Right cardiac atrium (tissue), 5 donors: ENCODE measurements at regions of chr4 and their contacts with region 1.

Region 1: DNA sequence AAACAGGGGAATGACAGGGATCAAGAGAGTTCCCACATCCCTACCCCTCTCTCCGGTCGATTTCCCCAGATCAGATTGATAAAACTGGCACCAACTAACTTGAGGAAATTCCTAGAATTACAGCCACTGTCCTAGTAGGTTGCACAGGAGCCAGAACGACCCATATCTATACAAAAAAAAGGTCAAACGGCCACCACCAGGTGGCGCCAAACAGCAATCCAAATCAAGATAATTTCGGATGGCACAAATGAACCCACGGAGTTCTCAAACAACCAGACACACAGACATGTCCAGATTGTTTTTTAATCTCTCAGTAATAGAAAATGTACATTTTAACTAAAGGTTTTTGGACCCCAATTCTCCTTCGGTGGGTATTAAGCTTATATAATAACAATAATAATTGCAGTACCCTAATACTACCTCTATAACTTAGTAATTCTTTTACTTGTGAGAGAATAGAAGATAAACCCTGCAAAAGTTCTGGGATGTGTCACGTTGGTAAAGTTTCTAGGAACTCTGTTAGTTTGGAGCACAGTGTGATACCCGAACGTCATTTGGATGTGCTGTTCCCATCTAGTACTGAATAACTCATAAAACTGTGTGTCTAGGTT is 212.6 kb downstream of the SPOCK3 start:
- DNase-seq: peak; percentile 58 to 86 (median 72)
- ATAC-seq: peak; percentile 42 to 56
- H3K4me3 ChIP-seq: no peak overlapping the region
- H3K27ac ChIP-seq: no peak overlapping the region
- H3K4me1 ChIP-seq: no peaks in the 10 kb centered on the region
- H3K27me3 ChIP-seq: no peaks in the 10 kb centered on the region

Region 2: GRCh38 chr4:167290678-167291077 is 269.0 kb after region 1 on chr4:
- intact Hi-C with region 1: loop called in 3 of 4 experiments (anchors 5 kb)
- DNase-seq: no peak
- ATAC-seq: no peak
- H3K4me3 ChIP-seq: no peak overlapping the region
- H3K27ac ChIP-seq: no peak overlapping the region
- H3K4me1 ChIP-seq: no peaks in the 10 kb centered on the region
- H3K27me3 ChIP-seq: no peaks in the 10 kb centered on the region

Region 3: DNA sequence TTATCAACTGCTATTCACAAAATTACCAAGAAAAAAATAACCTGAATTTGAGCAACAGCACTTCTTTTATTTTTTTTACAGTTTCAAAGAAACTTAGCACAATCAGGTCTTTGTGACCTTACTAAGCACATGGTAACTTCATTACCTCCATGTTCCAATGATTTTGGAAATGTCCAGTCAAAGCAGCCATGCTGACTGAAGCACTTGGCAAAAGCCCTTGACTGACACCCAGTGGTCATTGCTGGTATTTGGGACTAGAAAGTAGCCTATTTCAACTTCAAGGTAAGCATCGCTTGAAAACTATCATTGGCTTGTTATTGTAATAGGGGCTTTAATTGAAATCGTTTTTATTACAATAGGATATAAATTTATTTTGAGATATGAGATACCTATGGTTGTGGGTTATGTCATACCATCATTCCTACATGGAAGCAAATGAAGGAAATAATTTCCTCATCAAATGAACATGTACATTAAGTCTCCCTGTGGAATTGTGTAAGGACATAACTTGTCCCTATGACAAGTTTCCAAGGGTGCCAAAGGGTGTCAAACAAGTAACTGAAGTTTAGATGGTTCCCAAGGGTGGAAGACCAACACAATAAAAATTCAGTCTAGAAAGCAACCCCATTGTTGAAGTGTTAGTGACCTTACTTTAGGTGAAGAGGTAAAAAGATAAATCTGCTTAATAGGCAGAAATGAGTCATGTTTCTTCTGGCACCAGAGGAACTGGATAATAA is 1055.5 kb after region 1 on chr4:
- intact Hi-C with region 1: loop called in 2 of 4 experiments (anchors 10 kb)
- DNase-seq: peak in 2 of 3 donors; percentile 26 to 36
- ATAC-seq: peak in 1 of 2 donors; percentile 43
- H3K4me3 ChIP-seq: no peak overlapping the region
- H3K27ac ChIP-seq: no peak overlapping the region
- H3K4me1 ChIP-seq: no peaks in the 10 kb centered on the region
- H3K27me3 ChIP-seq: no peaks in the 10 kb centered on the region

Region 4: DNA sequence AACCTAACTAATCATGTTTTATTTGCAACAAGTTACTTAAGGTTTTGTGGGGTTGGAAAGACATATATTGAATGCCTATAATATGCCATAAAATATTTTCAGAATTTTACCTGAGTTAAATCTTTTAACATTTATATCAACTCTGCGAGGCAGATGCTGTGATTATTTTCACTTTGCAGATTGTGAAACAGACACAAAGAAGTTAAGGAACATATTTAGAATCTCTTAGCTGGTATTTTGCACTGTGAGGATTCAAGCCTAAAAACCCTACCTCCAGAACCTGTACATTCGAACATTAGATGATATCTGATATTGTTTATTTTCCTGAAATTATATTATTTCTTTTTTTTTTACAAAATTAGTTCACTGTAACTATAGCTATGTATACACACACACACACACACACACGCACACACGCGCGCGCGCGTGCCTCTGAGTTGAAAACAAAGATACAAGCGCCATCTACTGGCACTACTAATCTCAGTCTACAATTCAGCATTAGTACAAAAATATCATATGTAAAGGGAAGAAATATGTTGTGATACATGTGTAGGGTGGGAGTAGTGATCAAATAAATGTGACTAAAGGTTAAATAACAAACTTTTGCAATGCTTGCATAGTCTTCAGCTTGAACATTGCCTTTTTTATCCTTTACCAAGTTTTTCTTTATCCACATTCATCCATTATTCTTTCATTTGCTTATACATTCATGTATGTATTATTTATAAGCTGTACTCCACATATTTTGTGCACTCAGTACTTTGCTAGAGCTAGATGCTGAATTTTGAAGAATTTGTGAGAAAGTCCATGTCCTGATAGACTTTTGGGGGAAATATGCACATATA is 1132.2 kb after region 1 on chr4:
- intact Hi-C with region 1: loop called in 1 of 4 experiments (anchors 10 kb)
- DNase-seq: peak; percentile 73 to 94 (median 89)
- ATAC-seq: peak; percentile 68 to 69
- H3K4me3 ChIP-seq: peak overlapping the region; percentile 48
- H3K27ac ChIP-seq: no peak overlapping the region
- H3K4me1 ChIP-seq: no peaks in the 10 kb centered on the region
- H3K27me3 ChIP-seq: no peaks in the 10 kb centered on the region